ENCODE measurements at regions of chr4 and their contacts with region 1.

Region 1: DNA sequence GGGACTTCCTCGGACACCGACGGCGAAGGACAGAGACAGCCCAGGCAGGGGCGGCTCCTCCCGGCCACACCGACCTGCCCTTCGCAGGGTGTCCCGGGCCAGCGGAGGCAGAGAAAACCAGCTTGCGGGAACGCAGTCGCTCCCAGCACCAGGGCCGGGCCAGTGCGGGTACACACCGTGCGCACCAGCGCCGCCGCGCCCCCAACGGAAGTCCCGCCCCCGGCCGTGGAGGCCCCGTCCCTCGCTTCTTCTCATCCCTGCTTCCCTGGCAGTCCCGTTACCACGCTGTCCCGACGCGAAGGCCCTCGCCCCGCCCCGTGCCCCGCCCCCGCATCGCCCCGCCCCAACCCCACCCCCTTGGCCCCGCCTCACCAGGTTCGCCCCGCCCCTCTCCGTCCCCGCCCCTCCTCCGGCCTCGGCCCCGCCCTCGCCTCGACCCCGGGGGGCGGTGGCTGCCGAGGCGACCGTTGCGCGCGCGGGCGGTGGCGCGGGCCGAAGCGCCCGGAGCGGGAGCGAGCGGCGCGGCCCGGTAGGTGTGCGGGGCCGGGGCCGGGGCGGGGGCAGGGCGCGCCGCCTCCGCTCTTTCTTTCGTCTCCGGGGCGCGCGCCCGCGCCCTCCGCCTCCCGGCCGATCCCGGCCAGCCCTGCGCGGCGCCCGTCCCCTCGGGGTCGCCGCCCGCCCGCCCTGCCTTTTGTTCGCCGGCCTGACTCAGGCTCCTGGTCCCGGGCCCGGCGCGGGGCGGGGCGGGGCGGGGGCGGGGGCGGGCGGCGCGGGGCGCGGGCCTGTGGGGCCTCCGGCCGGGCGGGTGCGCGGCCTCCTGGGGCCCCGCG is at the start of gene RGS12:
- DNase-seq: peak; percentile 91
- ATAC-seq: peak; percentile 89
- H3K4me3 ChIP-seq: peak within 1 kb of the TSS; percentile 95
- H3K27ac ChIP-seq: peak within 1 kb of the TSS; percentile 88
- H3K4me1 ChIP-seq: peaks cover 19% of the 10 kb centered on the region
- H3K27me3 ChIP-seq: no peaks in the 10 kb centered on the region
- CTCF ChIP-seq: no peak
- POLR2A ChIP-seq: peak; percentile 58
- RAD21 ChIP-seq: no peak
- total RNA-seq, gene RGS12: 11.8 and 13.1 TPM in 2 replicates

Region 2: DNA sequence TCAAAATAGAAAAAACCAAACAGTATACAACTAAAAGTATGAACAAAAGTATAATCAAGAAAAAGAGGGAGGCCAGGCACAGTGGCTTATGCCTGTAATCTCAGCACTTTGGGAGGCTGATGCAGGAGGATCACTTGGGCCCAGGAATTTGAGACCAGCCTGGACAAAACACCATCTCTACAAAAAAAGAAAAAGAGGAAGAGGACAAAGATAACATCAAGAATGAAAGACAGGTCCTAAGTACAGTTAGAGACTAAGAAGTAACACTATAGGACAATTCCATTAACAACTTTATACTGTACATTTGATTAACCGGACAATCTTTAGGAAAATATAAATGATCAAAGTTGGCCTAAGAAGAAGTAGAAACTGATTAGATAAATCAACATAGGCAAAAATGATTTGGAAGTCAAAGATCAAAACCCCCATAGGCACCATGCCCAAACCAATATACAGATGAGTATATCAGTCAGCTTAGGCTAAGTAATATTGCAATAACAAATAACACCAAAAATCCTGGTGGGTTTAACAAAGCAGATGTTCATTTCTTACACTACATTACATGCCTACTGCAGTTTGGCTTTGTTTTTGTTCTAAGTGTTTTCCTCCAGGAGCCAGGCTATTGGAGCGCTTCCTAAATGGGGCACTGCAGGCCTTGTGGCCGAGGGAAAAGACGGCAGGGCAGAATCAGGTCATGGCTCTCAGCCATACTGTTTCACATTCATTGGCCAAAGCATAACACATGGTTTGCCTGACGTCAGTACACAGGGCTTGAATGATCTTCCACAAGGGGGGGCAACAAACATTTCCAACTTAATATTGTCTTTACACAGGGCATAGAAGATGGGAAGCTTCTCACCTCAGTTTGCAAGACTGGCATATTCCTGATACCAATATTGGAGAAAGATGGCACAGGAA is 106.8 kb after region 1 on chr4:
- CTCF ChIA-PET with region 1: no interaction called
- POLR2A ChIA-PET with region 1: no interaction called
- dilution Hi-C with region 1: no loop called
- in situ Hi-C with region 1: no loop called
- intact Hi-C with region 1: no loop called
- DNase-seq: no peak
- ATAC-seq: no peak
- H3K4me3 ChIP-seq: no peak overlapping the region
- H3K27ac ChIP-seq: no peak overlapping the region
- H3K4me1 ChIP-seq: peaks cover 6% of the 10 kb centered on the region
- H3K27me3 ChIP-seq: no peaks in the 10 kb centered on the region
- CTCF ChIP-seq: no peak
- POLR2A ChIP-seq: no peak
- RAD21 ChIP-seq: no peak

Region 3: DNA sequence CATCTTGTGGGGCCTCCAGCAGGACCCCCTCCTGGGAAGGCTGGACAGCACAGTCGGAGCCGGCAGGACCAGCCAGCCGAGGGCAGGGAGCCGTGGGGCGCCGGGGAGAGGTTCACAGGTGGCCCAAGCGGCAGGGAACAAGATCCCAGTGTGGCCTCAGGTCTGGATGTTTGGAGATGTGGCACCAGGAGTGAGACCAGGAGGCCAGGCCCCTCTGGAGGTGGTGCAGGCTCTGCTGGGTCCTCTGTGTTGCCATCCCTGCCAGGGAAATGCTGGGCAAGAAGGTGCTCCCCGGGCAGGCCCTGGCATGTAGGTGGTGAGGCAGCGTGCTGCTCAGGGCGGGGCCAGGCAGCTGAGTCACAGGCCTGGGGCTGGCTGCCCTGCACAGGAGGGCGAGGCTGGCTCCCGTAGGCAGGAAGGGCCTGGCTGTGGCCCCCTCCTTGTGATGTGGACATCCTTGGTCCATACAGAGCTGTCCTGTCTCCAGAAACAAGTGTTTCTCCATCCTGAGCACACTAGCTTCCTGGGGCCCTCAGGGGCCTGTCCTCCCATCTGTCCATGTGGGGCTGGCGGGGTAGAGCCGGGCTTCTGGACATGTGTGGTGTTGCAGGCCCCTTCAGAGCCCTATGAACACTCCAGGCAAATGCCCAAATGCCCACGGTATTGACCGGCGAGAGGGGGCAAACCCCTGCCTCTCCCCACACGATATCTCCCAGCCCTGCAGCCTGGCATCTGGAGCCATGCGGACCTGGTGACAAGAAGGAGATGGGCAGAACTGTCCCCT is 144.2 kb after region 1 on chr4:
- CTCF ChIA-PET with region 1: no interaction called
- POLR2A ChIA-PET with region 1: no interaction called
- dilution Hi-C with region 1: no loop called
- in situ Hi-C with region 1: no loop called
- intact Hi-C with region 1: loop called (anchors 5 kb)
- DNase-seq: peak; percentile 35
- ATAC-seq: peak; percentile 84
- H3K4me3 ChIP-seq: no peak overlapping the region
- H3K27ac ChIP-seq: peak overlapping the region; percentile 1; the same call in 1 of the 2 replicates
- H3K4me1 ChIP-seq: peaks cover 11% of the 10 kb centered on the region
- H3K27me3 ChIP-seq: no peaks in the 10 kb centered on the region
- CTCF ChIP-seq: no peak
- POLR2A ChIP-seq: no peak
- RAD21 ChIP-seq: no peak